T-cell (primary cell): ENCODE measurements at regions of chr22 and their contacts with region 1.

Region 1: DNA sequence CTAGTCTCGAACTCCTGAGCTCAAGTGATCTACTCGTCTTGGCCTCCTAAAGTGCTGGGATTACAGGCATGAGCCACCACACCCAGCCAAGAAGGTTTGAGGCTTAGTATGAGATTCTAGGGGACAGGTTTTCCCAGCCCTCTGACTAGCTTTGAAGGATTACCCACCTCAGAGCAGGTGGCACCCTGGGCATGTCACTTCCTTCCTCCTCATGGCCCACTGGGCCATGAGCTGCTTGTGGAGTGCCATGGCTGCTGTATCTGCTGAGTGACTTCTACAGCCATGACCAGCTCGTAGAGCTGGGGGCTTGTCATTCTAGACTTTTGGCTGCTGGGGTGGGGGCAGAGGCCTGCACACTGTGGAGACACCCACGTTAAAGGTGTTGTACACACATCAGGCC is 25.1 kb downstream of the TOM1 start:
- DNase-seq: no peak
- ATAC-seq: no peak
- H3K4me3 ChIP-seq: no peak overlapping the region
- H3K4me3 Mint-ChIP-seq: no peak overlapping the region
- H3K27ac ChIP-seq: no peak overlapping the region
- H3K27ac Mint-ChIP-seq: no peak overlapping the region
- H3K4me1 ChIP-seq: peaks cover 7 to 18% of the 10 kb centered on the region in 2 experiments
- H3K4me1 Mint-ChIP-seq: peaks cover 8 to 17% (median 16%) of the 10 kb centered on the region in 3 donors
- H3K27me3 ChIP-seq: no peaks in the 10 kb centered on the region
- H3K27me3 Mint-ChIP-seq: no peaks in the 10 kb centered on the region

Region 2: GRCh38 chr22:34841331-34841771 is 483.4 kb before region 1 on chr22:
- CTCF ChIA-PET with region 1: no interaction called
- POLR2A ChIA-PET with region 1: no interaction called
- DNase-seq: no peak
- ATAC-seq: no peak
- H3K4me3 ChIP-seq: no peak overlapping the region
- H3K4me3 Mint-ChIP-seq: no peak overlapping the region
- H3K27ac ChIP-seq: no peak overlapping the region
- H3K27ac Mint-ChIP-seq: no peak overlapping the region
- H3K4me1 ChIP-seq: no peaks in the 10 kb centered on the region
- H3K4me1 Mint-ChIP-seq: no peaks in the 10 kb centered on the region
- H3K27me3 ChIP-seq: no peaks in the 10 kb centered on the region
- H3K27me3 Mint-ChIP-seq: peaks cover 4 to 13% of the 10 kb centered on the region in 2 donors

Region 3: GRCh38 chr22:35341090-35341874 is 16.5 kb after region 1 on chr22:
- CTCF ChIA-PET with region 1: no interaction called
- POLR2A ChIA-PET with region 1: interaction called in 1 of 2 experiments, 13 read pairs
- DNase-seq: no peak
- ATAC-seq: no peak
- H3K4me3 ChIP-seq: no peak overlapping the region
- H3K4me3 Mint-ChIP-seq: no peak overlapping the region
- H3K27ac ChIP-seq: no peak overlapping the region
- H3K27ac Mint-ChIP-seq: no peak overlapping the region
- H3K4me1 ChIP-seq: no peaks in the 10 kb centered on the region
- H3K4me1 Mint-ChIP-seq: peaks cover 0 to under 1% (median 0%) of the 10 kb centered on the region in 3 donors
- H3K27me3 ChIP-seq: no peaks in the 10 kb centered on the region
- H3K27me3 Mint-ChIP-seq: no peaks in the 10 kb centered on the region

Region 4: DNA sequence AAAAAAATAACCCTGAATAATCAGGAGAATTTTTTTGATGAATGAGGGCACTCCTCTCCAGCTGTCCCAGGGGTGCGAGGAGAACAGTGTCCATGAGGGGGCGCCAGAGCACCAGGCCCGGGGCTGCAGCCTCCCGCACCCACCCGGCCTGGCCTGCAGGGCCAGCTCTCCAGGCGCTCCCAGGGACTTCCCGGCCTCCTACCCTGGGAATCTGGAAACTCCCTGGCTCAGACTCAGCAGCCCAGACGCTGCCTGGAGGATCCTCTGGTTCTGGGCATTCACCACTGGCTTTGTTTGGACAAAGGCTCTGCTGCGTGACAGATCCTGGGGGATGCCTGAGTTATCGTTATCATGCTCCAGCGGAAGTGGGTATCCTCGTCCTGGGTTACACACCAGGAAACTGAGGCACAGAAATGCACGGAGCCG is 106.1 kb after region 1 on chr22:
- CTCF ChIA-PET with region 1: no interaction called
- POLR2A ChIA-PET with region 1: no interaction called
- DNase-seq: peak; percentile 18 to 76 (median 57)
- ATAC-seq: peak; percentile 73 to 79 (median 74)
- H3K4me3 ChIP-seq: no peak overlapping the region
- H3K4me3 Mint-ChIP-seq: no peak overlapping the region
- H3K27ac ChIP-seq: no peak overlapping the region
- H3K27ac Mint-ChIP-seq: no peak overlapping the region
- H3K4me1 ChIP-seq: peaks cover 0 to 3% of the 10 kb centered on the region in 2 experiments
- H3K4me1 Mint-ChIP-seq: no peaks in the 10 kb centered on the region
- H3K27me3 ChIP-seq: no peaks in the 10 kb centered on the region
- H3K27me3 Mint-ChIP-seq: no peaks in the 10 kb centered on the region